Activated CD4-positive, alpha-beta memory T cell treated with anti-CD3 and anti-CD28 coated beads for 36 hours (primary cell): ENCODE measurements at regions of chr11 and their contacts with region 1.

Region 1: DNA sequence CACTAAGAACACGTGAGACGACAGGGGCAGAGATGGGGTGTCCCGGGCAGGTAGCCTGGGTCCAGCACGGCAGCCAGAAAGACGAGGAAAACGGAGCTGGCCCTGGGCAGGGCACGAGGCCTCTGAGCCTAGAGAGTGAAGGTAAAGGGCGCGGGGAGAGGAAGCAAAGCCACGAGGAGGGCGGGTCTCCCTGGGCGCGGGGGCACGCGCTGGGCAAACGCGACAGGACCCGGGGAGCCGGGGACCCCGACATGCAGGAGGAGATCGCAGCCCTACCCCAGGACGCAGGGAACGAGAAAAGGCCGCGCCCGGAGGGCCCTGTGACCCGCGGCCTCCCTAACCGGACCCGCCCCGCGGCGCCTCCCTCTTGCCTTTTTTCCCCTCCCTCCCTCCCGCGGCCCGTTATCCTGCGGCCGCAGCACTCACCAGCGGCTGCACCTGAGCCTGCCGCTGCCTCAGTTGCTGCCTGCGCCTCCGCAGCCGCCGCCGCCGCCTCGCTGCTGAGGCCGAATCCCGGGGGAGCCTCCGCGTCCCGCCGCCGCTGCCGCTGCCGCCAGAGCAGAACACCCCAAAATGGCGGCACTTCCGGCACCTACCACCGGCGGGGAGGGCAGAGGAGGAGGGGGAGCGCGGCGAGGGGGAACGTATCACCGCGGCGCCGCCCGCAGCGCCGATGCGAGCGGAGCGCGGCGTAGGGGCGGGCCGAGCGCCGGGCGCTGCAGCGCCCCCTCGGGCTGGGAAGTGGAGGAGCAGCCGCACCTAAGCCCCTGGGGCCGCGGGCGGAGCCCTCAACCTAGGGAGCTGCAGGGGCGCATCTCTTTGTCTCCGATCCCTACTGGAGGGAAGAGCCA is at the start of gene CELF1:
- DNase-seq: peak; percentile 96
- H3K4me3 Mint-ChIP-seq: peak within 1 kb of the TSS; percentile 95
- H3K27ac Mint-ChIP-seq: peak within 1 kb of the TSS; percentile 92
- H3K4me1 Mint-ChIP-seq: peaks cover 39% of the 10 kb centered on the region
- H3K27me3 Mint-ChIP-seq: no peaks in the 10 kb centered on the region
- total RNA-seq, gene CELF1: 103 to 115 TPM

Region 2: DNA sequence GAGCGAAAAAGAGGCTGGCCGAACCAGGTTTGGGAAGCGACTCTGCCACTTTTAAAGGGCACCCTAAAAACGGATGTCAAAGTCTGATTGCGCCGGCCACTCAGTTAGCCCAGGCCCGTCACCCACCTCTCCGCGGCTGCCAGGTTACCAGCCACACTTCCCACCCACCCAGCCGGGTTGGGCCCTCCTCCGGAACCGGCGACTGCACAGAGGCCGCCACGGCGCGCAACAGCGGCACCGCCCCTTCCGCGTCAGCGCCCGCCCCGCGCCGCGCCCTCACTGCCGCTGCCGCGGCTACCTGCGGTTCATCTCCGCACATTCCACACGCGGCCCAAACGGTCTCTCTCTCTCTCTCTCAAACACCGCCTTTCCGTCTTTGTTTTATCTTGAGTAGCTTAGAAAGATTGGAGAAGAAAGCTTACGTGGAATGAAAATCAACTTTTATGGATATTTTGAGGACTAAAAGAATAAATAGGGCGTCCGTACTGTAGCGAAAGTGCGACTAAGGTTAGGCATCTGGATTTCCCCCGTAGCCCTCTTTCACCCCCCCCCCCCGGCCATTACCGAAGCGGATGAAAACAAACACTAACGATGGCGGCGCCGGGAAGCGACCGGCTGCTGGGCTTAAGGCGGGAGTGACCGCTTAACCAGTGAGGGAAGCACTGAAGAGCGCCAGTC is 935.7 kb before region 1 on chr11 and contains the starts of genes ATG13 and HARBI1:
- CTCF ChIA-PET with region 1: no interaction called
- POLR2A ChIA-PET with region 1: no interaction called
- intact Hi-C with region 1: loop called (anchors 2 kb)
- DNase-seq: peak; percentile 95
- H3K4me3 Mint-ChIP-seq: peak within 1 kb of the TSS; percentile 93
- H3K27ac Mint-ChIP-seq: peak within 1 kb of the TSS; percentile 98
- H3K4me1 Mint-ChIP-seq: peaks cover 39% of the 10 kb centered on the region
- H3K27me3 Mint-ChIP-seq: no peaks in the 10 kb centered on the region
- total RNA-seq, gene ATG13: 49.9 to 51.0 TPM
- total RNA-seq, gene HARBI1: 3.1 TPM

Region 3: DNA sequence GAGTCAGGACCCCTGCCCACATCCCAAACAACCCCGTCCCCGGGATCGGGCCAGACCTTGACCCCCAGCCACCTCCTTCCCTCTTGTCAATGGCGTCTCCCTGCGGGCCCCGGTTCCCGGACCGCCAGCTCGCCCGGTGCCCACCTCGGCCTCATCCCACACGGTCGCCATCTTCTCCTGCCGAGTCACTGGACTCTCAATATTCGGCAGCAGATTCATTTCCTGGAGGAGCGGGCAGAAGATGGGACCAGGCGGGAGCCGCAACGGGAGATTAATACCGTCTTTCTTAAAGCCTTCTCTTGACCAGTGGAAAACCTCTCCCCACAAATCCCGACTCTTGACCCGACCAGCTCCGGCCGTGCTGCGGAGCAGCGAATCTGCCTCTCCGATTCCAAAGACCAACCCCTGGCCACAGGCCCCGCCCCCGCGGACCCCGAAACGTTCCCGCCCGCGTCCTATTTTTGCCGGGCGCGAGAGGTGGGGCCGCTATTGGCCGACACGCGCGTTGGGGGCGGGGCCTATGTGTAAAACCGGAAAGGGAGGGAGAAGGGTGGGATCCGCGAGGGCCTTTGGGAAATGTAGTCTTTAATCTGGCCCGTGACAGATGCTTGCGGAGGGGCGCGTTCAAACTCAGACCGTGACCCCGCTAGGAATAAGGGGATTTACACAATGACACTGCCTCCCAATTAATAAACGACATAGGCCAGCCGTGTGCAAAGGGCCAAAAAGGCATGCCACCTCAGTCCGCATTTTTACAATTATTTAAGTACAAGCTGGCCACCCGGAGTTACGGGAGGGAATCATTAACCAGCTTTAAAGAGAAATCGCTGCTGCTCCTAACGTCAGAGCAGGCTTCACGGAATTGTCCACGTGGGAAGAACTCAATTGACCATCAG is 126.5 kb before region 1 on chr11 and contains the start of gene PSMC3:
- CTCF ChIA-PET with region 1: no interaction called
- POLR2A ChIA-PET with region 1: no interaction called
- intact Hi-C with region 1: loop called (anchors 1 kb)
- DNase-seq: peak; percentile 99
- H3K4me3 Mint-ChIP-seq: peak within 1 kb of the TSS; percentile 100
- H3K27ac Mint-ChIP-seq: peak within 1 kb of the TSS; percentile 95
- H3K4me1 Mint-ChIP-seq: peaks cover 26% of the 10 kb centered on the region
- H3K27me3 Mint-ChIP-seq: no peaks in the 10 kb centered on the region
- total RNA-seq, gene PSMC3: 143 to 148 TPM

Region 4: DNA sequence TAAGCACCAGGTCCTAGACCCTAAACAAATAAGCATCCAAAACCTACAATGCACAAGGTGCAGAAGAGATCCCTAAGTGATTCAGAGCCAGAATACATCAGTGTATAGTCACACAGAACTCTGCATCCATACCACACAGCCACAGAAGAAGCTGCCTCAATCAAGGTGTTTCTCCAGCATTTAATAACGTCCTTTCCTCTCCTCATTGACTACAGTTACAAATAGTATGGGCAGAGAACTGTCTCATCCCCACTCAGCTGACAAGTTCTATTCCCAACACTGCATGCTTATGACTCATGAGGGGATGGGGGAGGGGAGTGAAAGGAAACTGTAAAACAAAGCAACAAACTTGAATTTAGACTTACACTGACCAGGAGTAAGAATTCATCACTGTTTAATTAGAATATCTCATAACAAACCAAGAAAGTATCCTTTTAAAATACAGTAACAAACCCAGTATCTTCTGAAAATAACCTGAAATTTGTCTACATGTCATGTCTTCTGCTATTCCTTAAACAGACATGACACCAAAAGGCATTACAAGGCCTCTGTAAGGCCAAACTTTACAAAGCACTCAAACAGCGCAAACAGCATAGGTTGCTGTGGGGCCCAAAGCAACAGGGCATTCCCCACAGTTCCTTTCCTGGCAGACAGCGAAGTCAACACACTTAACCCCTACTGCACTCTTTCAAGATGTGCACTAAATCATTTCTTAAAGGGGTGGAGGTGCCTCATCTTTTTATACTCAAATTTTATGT is 29.1 kb before region 1 on chr11:
- CTCF ChIA-PET with region 1: no interaction called
- POLR2A ChIA-PET with region 1: interaction called, 4 read pairs
- intact Hi-C with region 1: loop called (anchors 2 kb)
- DNase-seq: peak; percentile 66
- H3K4me3 Mint-ChIP-seq: peak overlapping the region; percentile 40
- H3K27ac Mint-ChIP-seq: peak overlapping the region; percentile 91
- H3K4me1 Mint-ChIP-seq: peaks cover 72% of the 10 kb centered on the region
- H3K27me3 Mint-ChIP-seq: no peaks in the 10 kb centered on the region

Region 5: GRCh38 chr11:47578524-47579460 is 26.0 kb after region 1 on chr11 and contains the starts of genes KBTBD4 and NDUFS3:
- CTCF ChIA-PET with region 1: interaction called, 9 read pairs
- POLR2A ChIA-PET with region 1: interaction called, 3 read pairs
- intact Hi-C with region 1: loop called (anchors 1 kb)
- DNase-seq: peak; percentile 93
- H3K4me3 Mint-ChIP-seq: peak within 1 kb of the TSS; percentile 94
- H3K27ac Mint-ChIP-seq: peak within 1 kb of the TSS; percentile 93
- H3K4me1 Mint-ChIP-seq: peaks cover 32% of the 10 kb centered on the region
- H3K27me3 Mint-ChIP-seq: peaks cover 1% of the 10 kb centered on the region
- total RNA-seq, gene KBTBD4: 18.7 to 18.8 TPM
- total RNA-seq, gene NDUFS3: 94.0 to 94.4 TPM

Region 6: GRCh38 chr11:47858169-47858543 is 305.4 kb after region 1 on chr11:
- CTCF ChIA-PET with region 1: no interaction called
- POLR2A ChIA-PET with region 1: no interaction called
- intact Hi-C with region 1: loop called (anchors 10 kb)
- DNase-seq: no peak
- H3K4me3 Mint-ChIP-seq: no peak overlapping the region
- H3K27ac Mint-ChIP-seq: no peak overlapping the region
- H3K4me1 Mint-ChIP-seq: peaks cover 24% of the 10 kb centered on the region
- H3K27me3 Mint-ChIP-seq: no peaks in the 10 kb centered on the region

Region 7: GRCh38 chr11:48237727-48238126 is 684.9 kb after region 1 on chr11:
- CTCF ChIA-PET with region 1: no interaction called
- POLR2A ChIA-PET with region 1: no interaction called
- intact Hi-C with region 1: no loop called
- DNase-seq: no peak
- H3K4me3 Mint-ChIP-seq: no peak overlapping the region
- H3K27ac Mint-ChIP-seq: no peak overlapping the region
- H3K4me1 Mint-ChIP-seq: no peaks in the 10 kb centered on the region
- H3K27me3 Mint-ChIP-seq: peaks cover 19% of the 10 kb centered on the region